ENCODE measurements at regions of chr17 and their contacts with region 1.

Region 1: DNA sequence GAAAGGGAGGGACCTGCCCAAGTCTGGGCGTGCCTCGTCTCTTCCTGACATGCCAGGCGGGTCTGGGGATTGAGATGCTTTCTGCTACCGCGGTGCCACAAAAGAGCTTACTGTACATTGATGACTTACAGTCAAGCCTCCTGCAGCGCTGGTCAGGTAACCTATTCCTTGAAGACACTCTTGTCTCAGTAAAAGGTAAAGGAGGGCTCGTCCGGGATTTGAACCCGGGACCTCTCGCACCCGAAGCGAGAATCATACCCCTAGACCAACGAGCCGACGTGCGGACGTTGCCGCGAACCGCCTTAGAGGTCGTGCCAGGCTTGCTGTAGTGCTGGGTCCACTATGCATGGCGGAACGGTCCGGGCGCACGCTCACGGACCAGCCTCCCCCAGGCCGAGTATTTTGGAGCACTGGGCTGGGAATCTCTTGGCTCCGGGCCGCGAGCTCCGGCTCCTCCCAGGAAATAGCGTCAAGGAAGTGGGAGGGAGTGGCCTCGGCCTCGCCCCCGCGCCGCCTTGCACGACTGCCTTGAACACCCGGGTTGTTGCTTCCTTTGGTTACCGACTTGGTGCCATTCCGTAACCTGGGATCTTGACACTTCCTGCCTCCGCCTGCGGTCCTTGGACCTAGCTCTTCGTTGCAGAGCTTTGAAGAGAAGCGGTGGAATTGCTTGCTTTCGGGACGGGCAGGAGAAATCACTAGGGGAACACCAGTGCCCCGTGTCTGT is 12.4 kb upstream of the AURKB start:
- DNase-seq: peak; percentile 85
- H3K4me3 Mint-ChIP-seq: peak overlapping the region; percentile 97
- H3K27ac Mint-ChIP-seq: peak overlapping the region; percentile 96
- H3K4me1 Mint-ChIP-seq: peaks cover 43% of the 10 kb centered on the region
- H3K27me3 Mint-ChIP-seq: no peaks in the 10 kb centered on the region

Region 2: GRCh38 chr17:8138672-8139371 is 84.0 kb before region 1 on chr17:
- intact Hi-C with region 1: loop called (anchors 1 kb)
- DNase-seq: peak; percentile 97
- H3K4me3 Mint-ChIP-seq: no peak overlapping the region
- H3K27ac Mint-ChIP-seq: no peak overlapping the region
- H3K4me1 Mint-ChIP-seq: peaks cover 2% of the 10 kb centered on the region
- H3K27me3 Mint-ChIP-seq: peaks cover 5% of the 10 kb centered on the region

Region 3: DNA sequence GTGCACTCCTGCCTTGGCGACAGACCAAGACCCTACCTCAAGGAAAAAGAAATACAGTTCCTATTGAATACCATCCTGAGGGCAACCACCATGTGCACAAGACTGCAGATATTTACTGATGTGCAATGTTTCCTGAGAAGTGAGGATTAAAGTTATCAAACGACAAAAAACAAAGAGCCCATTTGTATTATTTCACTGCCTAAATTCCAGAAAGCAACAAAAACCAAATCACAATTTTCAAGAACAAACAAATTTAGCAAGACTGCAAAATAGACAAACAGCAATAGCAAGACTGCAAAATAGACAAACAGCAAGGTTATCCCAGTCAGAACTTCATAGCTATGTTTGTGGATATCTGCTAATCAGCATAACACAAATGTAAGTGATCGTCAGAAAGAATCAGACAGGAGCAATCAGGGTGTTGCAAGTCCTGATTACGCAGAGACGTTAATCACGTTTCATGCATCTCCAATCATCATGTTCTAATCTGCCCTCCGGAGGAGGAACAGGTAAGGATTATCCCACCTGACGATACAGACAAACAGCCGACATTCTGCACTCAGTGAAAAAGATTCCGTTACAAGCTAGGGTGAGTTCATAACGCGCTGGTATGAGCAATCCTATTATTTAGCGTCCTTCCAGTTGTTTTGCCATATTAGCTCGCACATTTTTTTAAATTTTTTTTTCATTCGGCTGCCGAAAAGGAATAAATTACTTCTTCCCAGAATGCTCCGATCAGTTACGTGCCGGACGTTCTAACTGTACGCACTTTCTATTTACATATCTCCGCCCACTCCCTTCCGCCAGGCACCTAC is 49.5 kb before region 1 on chr17:
- intact Hi-C with region 1: no loop called
- DNase-seq: peak; percentile 79
- H3K4me3 Mint-ChIP-seq: peak overlapping the region; percentile 86
- H3K27ac Mint-ChIP-seq: peak overlapping the region; percentile 100
- H3K4me1 Mint-ChIP-seq: peaks cover 40% of the 10 kb centered on the region
- H3K27me3 Mint-ChIP-seq: no peaks in the 10 kb centered on the region

Region 4: DNA sequence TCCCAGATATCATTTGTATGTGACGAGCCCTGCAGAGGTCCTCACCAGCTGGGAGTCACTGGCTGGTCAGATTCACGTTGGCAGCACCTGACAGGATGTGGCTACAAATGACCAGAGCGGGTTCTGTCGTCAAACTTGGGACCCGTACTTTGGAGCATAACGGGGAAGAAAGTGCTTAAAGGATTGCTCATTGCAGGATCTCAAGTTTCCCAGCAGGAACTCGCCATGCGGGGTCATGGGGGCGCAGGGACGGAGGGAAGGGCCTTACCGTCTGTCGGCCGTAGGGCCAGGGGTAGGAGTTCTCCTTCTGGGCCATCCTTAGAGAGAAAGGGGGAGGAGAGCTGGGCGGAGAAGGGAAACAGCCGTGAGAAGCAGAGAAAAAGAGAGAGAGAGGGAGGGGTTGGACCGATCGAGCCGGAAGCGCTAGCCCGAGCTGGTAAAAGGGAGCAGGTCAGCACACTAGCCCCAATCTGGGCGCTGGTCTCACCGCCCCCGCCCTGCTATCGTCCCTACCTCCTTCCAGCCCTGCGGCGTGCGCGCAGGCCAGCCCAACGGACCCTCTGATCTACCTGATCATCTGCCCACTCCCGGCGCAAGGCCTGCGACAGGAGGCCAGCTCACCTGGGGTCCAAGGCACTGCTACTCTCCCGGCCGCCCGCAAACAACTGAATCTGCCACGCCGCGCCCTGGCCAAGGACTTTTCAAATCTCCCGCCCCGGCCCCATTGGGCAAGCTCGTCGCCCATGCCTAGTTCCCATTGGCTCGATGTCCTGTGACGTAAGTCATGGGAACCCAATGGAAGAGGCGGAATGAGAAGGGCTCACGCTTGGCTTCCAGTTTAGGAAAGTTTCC is 12.7 kb before region 1 on chr17 and contains the start of gene AURKB:
- intact Hi-C with region 1: loop called (anchors 1 kb)
- DNase-seq: peak; percentile 91
- H3K4me3 Mint-ChIP-seq: peak within 1 kb of the TSS; percentile 98
- H3K27ac Mint-ChIP-seq: peak within 1 kb of the TSS; percentile 95
- H3K4me1 Mint-ChIP-seq: peaks cover 21% of the 10 kb centered on the region
- H3K27me3 Mint-ChIP-seq: no peaks in the 10 kb centered on the region
- total RNA-seq, gene AURKB: 113 TPM in 2 replicates

Region 5: GRCh38 chr17:8248751-8249607 is 26.2 kb after region 1 on chr17 and contains the start of gene PFAS:
- intact Hi-C with region 1: loop called (anchors 1 kb)
- DNase-seq: peak; percentile 95
- H3K4me3 Mint-ChIP-seq: peak within 1 kb of the TSS; percentile 99
- H3K27ac Mint-ChIP-seq: peak within 1 kb of the TSS; percentile 100
- H3K4me1 Mint-ChIP-seq: peaks cover 30% of the 10 kb centered on the region
- H3K27me3 Mint-ChIP-seq: no peaks in the 10 kb centered on the region
- total RNA-seq, gene PFAS: 165 and 174 TPM in 2 replicates

Region 6: DNA sequence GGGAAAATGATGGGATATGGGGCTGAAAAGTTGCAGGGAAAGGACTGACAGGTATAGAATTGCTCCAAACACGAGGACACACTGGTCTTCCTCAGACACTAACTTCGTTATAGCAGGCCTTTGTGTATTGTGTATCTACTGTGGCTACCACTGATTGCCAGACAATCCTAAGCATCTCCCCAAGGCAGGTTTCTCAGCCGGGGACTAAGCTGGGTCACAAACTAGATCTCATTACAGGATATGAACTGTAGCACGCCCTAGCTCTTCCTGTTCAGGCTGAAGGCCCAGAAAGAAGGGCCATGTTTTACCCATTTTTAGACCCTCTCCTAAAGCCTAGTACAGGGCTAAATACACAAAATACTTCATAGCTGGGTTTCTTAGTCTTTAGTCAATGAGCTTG is 60.6 kb after region 1 on chr17:
- intact Hi-C with region 1: no loop called
- DNase-seq: no peak
- H3K4me3 Mint-ChIP-seq: no peak overlapping the region
- H3K27ac Mint-ChIP-seq: no peak overlapping the region
- H3K4me1 Mint-ChIP-seq: peaks cover 35% of the 10 kb centered on the region
- H3K27me3 Mint-ChIP-seq: no peaks in the 10 kb centered on the region

Region 7: DNA sequence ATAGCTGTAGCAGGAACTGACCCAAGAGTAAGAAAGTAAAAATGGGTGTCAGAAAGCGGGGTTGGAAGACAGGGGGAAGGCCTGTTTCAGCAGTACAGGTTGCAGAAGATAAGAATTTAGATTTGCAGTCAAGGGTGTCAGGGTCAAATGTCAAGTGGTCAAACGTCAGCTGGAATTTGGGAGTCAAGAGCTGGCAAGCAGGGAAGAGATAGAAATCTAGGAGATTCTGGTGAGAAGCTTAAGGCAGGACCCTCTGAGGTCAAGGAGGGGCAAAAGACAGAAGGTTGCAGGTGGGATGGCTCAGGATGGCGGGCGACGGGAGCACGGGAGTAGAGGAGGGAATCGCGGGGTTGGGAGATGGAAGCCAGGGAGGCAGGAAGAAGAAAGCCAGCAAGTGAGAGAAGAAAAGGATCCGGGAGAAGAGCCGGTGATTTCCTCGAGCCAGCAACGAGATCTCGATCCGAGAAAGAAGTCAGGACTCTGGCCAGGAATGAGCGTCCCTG is 72.1 kb after region 1 on chr17:
- intact Hi-C with region 1: loop called (anchors 2 kb)
- DNase-seq: no peak
- H3K4me3 Mint-ChIP-seq: peak overlapping the region; percentile 90
- H3K27ac Mint-ChIP-seq: peak overlapping the region; percentile 91
- H3K4me1 Mint-ChIP-seq: peaks cover 33% of the 10 kb centered on the region
- H3K27me3 Mint-ChIP-seq: no peaks in the 10 kb centered on the region

Region 8: DNA sequence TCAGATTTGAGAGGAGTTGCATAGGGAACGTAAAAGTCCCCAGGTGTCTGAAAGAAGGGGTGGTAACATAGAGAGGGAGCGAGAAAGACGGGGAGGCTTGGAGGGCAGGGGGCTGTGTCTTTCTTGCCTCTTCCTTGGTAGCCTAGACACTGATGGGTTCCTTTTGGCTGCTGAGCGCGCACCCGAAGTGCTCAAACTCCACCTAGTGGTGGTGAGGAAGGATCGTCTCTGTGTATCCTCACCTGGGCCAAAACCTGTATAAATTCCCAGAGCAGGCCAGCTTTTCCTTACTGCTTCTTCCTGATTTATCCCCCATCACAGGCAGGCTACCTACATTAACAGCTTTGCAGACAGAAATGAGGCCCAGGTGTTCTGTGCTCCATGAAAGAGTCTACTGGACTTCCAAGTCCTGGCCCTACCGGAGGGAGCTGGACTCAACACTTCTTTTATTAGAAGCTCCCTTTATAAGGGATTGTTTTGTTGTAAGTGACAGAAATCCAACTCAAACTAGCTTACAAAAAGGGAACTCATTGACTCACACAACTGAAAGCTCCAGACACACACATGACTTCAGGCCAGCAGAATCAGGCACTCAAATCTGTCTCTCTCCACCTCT is 77.9 kb after region 1 on chr17:
- intact Hi-C with region 1: loop called (anchors 2 kb)
- DNase-seq: peak; percentile 49
- H3K4me3 Mint-ChIP-seq: no peak overlapping the region
- H3K27ac Mint-ChIP-seq: no peak overlapping the region
- H3K4me1 Mint-ChIP-seq: peaks cover 11% of the 10 kb centered on the region
- H3K27me3 Mint-ChIP-seq: no peaks in the 10 kb centered on the region

Region 9: GRCh38 chr17:8326511-8327302 is 103.9 kb after region 1 on chr17:
- intact Hi-C with region 1: no loop called
- DNase-seq: peak; percentile 14
- H3K4me3 Mint-ChIP-seq: peak overlapping the region; percentile 54
- H3K27ac Mint-ChIP-seq: no peak overlapping the region
- H3K4me1 Mint-ChIP-seq: peaks cover 13% of the 10 kb centered on the region
- H3K27me3 Mint-ChIP-seq: peaks cover 47% of the 10 kb centered on the region

Region 10: GRCh38 chr17:8383143-8383822 is 160.5 kb after region 1 on chr17 and contains the start of gene RPL26:
- intact Hi-C with region 1: loop called (anchors 10 kb)
- DNase-seq: peak; percentile 94
- H3K4me3 Mint-ChIP-seq: peak within 1 kb of the TSS; percentile 99
- H3K27ac Mint-ChIP-seq: peak within 1 kb of the TSS; percentile 96
- H3K4me1 Mint-ChIP-seq: peaks cover 33% of the 10 kb centered on the region
- H3K27me3 Mint-ChIP-seq: no peaks in the 10 kb centered on the region
- total RNA-seq, gene RPL26: 2,352 and 2,379 TPM in 2 replicates

Measured in activated T-helper 2 cell treated with anti-CD3 and anti-CD28 coated beads, Interferon-gamma antibody, Interleukin-2, Interleukin-4, amounts not matched to agents 10 μg/mL and 5 μg/mL and 100 μg/mL, durations not matched to agents 14 hours and 24 hours and 36 hours (primary cell).